CD4-positive, alpha-beta memory T cell (primary cell): ENCODE measurements at regions of chr16 and their contacts with region 1.

Region 1: GRCh38 chr16:57795431-57795878 is 6.8 kb downstream of the KIFC3 start:
- DNase-seq: peak in 3 of 5 donors; percentile 20 to 31 (median 22)
- H3K4me3 ChIP-seq: no peak overlapping the region
- H3K4me3 Mint-ChIP-seq: no peak overlapping the region
- H3K27ac ChIP-seq: no peak overlapping the region
- H3K27ac Mint-ChIP-seq: no peak overlapping the region
- H3K4me1 ChIP-seq: peaks cover 15% of the 10 kb centered on the region
- H3K4me1 Mint-ChIP-seq: peaks cover 13 to 23% (median 16%) of the 10 kb centered on the region in 4 donors
- H3K27me3 ChIP-seq: no peaks in the 10 kb centered on the region
- H3K27me3 Mint-ChIP-seq: peaks cover 0 to 1% of the 10 kb centered on the region in 2 donors

Region 2: GRCh38 chr16:57863434-57864160 is 68.1 kb after region 1 on chr16:
- CTCF ChIA-PET with region 1: interaction called, 7 read pairs
- POLR2A ChIA-PET with region 1: no interaction called
- intact Hi-C with region 1: loop called (anchors 1 kb)
- DNase-seq: no peak
- H3K4me3 ChIP-seq: no peak overlapping the region
- H3K4me3 Mint-ChIP-seq: no peak overlapping the region
- H3K27ac ChIP-seq: no peak overlapping the region
- H3K27ac Mint-ChIP-seq: peak overlapping the region in 1 of 7 donors; percentile 0
- H3K4me1 ChIP-seq: no peaks in the 10 kb centered on the region
- H3K4me1 Mint-ChIP-seq: no peaks in the 10 kb centered on the region
- H3K27me3 ChIP-seq: no peaks in the 10 kb centered on the region
- H3K27me3 Mint-ChIP-seq: peaks cover 4 to 23% of the 10 kb centered on the region in 2 donors